ENCODE measurements at regions of chr12 and their contacts with region 1.

Region 1: DNA sequence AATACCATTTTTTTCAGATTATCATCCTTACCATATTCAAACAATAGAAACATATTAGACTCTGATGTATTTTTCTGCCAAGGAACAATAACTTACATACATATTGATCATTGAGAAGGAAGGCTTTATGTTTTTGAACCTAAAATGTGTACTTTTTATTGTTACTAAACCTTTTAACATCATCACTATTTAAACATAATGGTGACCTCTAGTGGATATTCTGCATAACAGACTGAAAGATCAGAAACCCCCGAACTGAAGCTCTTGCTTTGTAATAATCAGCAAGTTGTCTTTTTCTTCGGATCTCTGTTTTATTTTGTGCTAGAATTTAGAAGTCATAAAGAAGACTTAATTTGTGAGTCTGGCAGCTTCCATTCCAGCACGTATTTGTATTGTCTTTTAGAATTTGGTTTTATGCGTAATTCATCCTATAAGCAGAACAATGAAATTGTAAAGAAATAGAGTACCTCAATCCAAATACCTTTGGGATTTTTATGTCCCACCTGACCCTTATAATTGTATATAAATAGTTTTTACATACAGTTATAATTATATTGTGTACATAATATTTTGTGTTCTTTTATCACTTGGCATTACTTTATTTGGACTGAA is 125.9 kb upstream of the ATF1 start:
- DNase-seq: peak; percentile 73
- ATAC-seq: no peak
- H3K4me3 ChIP-seq: no peak overlapping the region
- H3K27ac ChIP-seq: peak overlapping the region; percentile 22
- H3K4me1 ChIP-seq: peaks cover 54% of the 10 kb centered on the region
- H3K27me3 ChIP-seq: no peaks in the 10 kb centered on the region
- CTCF ChIP-seq: peak; percentile 88

Region 2: GRCh38 chr12:50569321-50569720 is 68.7 kb before region 1 on chr12:
- CTCF ChIA-PET with region 1: no interaction called
- POLR2A ChIA-PET with region 1: no interaction called
- intact Hi-C with region 1: no loop called
- DNase-seq: no peak
- ATAC-seq: no peak; the same call in 1 of the 2 replicates
- H3K4me3 ChIP-seq: no peak overlapping the region
- H3K27ac ChIP-seq: no peak overlapping the region
- H3K4me1 ChIP-seq: peaks cover 17% of the 10 kb centered on the region
- H3K27me3 ChIP-seq: no peaks in the 10 kb centered on the region
- CTCF ChIP-seq: no peak

Region 3: GRCh38 chr12:50597200-50598195 is 40.5 kb before region 1 on chr12:
- CTCF ChIA-PET with region 1: no interaction called
- POLR2A ChIA-PET with region 1: no interaction called
- intact Hi-C with region 1: loop called (anchors 5 kb)
- DNase-seq: peak; percentile 83
- ATAC-seq: peak; percentile 98
- H3K4me3 ChIP-seq: peak overlapping the region; percentile 25; the same call in 1 of the 2 replicates
- H3K27ac ChIP-seq: peak overlapping the region; percentile 61
- H3K4me1 ChIP-seq: peaks cover 15% of the 10 kb centered on the region
- H3K27me3 ChIP-seq: no peaks in the 10 kb centered on the region
- CTCF ChIP-seq: peak; percentile 47; the same call in 1 of the 2 replicates

Measured in PC-3 (cell line).